Naive thymus-derived CD4-positive, alpha-beta T cell (primary cell): ENCODE measurements at regions of chr19 and their contacts with region 1.

Region 1: GRCh38 chr19:33373701-33374421 is at the start of gene CEBPG:
- DNase-seq: peak in 2 of 9 donors; percentile 57 to 68
- ATAC-seq: peak; percentile 52
- H3K4me3 ChIP-seq: peak within 1 kb of the TSS; percentile 93
- H3K4me3 Mint-ChIP-seq: peak within 1 kb of the TSS; percentile 87 to 95 (median 92)
- H3K27ac ChIP-seq: peak within 1 kb of the TSS; percentile 98
- H3K27ac Mint-ChIP-seq: peak within 1 kb of the TSS; percentile 73 to 97 (median 85)
- H3K4me1 ChIP-seq: peaks cover 16 to 19% of the 10 kb centered on the region in 2 donors
- H3K4me1 Mint-ChIP-seq: peaks cover 36 to 52% (median 48%) of the 10 kb centered on the region in 7 donors
- H3K27me3 ChIP-seq: no peaks in the 10 kb centered on the region
- H3K27me3 Mint-ChIP-seq: peaks cover 0 to 3% (median 0%) of the 10 kb centered on the region in 5 donors
- total RNA-seq, gene CEBPG: 17.1 to 22.4 (median 21.1) TPM

Region 2: GRCh38 chr19:32345261-32346207 is 1028.3 kb before region 1 on chr19 and contains the start of gene ZNF507:
- CTCF ChIA-PET with region 1: no interaction called
- POLR2A ChIA-PET with region 1: no interaction called
- intact Hi-C with region 1: loop called in 1 of 2 experiments (anchors 10 kb)
- DNase-seq: peak; percentile 69 to 90 (median 77)
- ATAC-seq: peak; percentile 93
- H3K4me3 ChIP-seq: peak within 1 kb of the TSS; percentile 71
- H3K4me3 Mint-ChIP-seq: peak within 1 kb of the TSS; percentile 95 to 99 (median 97)
- H3K27ac ChIP-seq: peak within 1 kb of the TSS; percentile 89
- H3K27ac Mint-ChIP-seq: peak within 1 kb of the TSS; percentile 88 to 99 (median 95)
- H3K4me1 ChIP-seq: peaks cover 27 to 30% of the 10 kb centered on the region in 2 donors
- H3K4me1 Mint-ChIP-seq: peaks cover 30 to 47% (median 43%) of the 10 kb centered on the region in 7 donors
- H3K27me3 ChIP-seq: no peaks in the 10 kb centered on the region
- H3K27me3 Mint-ChIP-seq: peaks cover 0 to 18% (median 5%) of the 10 kb centered on the region in 5 donors
- total RNA-seq, gene ZNF507: 21.6 to 46.3 (median 36.4) TPM

Region 3: GRCh38 chr19:32971715-32972540 is 401.9 kb before region 1 on chr19 and contains the starts of genes CEP89 and FAAP24:
- CTCF ChIA-PET with region 1: no interaction called
- POLR2A ChIA-PET with region 1: no interaction called
- intact Hi-C with region 1: loop called (anchors 2 kb)
- DNase-seq: peak; percentile 89 to 99 (median 98)
- ATAC-seq: peak; percentile 98
- H3K4me3 ChIP-seq: peak within 1 kb of the TSS; percentile 78
- H3K4me3 Mint-ChIP-seq: peak within 1 kb of the TSS; percentile 96 to 100 (median 99)
- H3K27ac ChIP-seq: peak within 1 kb of the TSS; percentile 75
- H3K27ac Mint-ChIP-seq: peak within 1 kb of the TSS; percentile 92 to 97 (median 97)
- H3K4me1 ChIP-seq: peaks cover 0 to 5% of the 10 kb centered on the region in 2 donors
- H3K4me1 Mint-ChIP-seq: peaks cover 14 to 27% (median 20%) of the 10 kb centered on the region in 7 donors
- H3K27me3 ChIP-seq: no peaks in the 10 kb centered on the region
- H3K27me3 Mint-ChIP-seq: no peaks in the 10 kb centered on the region
- total RNA-seq, gene CEP89: 7.4 to 22.4 (median 20.1) TPM
- total RNA-seq, gene FAAP24: 0.71 to 7.2 (median 2.5) TPM

Region 4: DNA sequence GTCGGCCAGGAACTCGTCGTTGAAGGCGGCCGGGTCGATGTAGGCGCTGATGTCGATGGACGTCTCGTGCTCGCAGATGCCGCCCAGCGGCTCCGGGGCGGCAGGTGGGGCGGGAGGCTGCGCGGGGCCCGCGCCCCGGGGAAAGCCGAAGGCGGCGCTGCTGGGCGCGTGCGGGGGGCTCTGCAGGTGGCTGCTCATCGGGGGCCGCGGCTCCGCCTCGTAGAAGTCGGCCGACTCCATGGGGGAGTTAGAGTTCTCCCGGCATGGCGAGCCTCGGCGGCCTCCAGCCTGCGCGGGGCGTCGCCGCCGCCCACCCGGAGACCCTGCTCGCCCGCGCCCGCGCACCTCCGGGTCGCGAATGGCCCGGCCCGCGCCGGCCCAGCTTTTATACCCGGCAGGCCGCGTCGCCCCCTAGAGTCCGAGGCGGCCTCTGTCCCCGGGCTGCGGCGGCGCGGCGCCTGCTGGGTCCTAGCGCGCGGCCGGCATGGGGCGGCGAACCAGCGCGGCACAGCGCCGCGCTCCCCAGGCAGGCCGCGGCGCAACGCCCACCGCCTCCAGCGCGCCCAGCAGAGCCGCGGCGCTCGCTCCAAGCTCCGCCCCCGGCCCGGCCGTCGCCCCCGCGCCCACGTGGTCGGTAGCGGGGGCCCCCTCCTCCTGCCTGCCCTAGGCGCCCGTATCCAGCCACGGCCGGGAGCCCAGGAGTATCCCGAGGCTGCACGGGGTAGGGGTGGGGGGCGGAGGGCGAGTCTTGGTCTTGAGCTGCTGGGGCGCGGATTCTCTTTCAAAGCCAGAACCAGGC is 71.5 kb before region 1 on chr19 and contains the start of gene CEBPA:
- CTCF ChIA-PET with region 1: no interaction called
- POLR2A ChIA-PET with region 1: no interaction called
- intact Hi-C with region 1: loop called (anchors 1 to 2 kb)
- DNase-seq: peak in 3 of 9 donors; percentile 9 to 76 (median 67)
- ATAC-seq: peak; percentile 91
- H3K4me3 ChIP-seq: peak within 1 kb of the TSS; percentile 43
- H3K4me3 Mint-ChIP-seq: peak within 1 kb of the TSS in 7 of 10 donors; percentile 29 to 78 (median 68)
- H3K27ac ChIP-seq: no peak within 1 kb of the TSS
- H3K27ac Mint-ChIP-seq: no peak within 1 kb of the TSS
- H3K4me1 ChIP-seq: no peaks in the 10 kb centered on the region
- H3K4me1 Mint-ChIP-seq: peaks cover 0 to 6% (median 4%) of the 10 kb centered on the region in 7 donors
- H3K27me3 ChIP-seq: no peaks in the 10 kb centered on the region
- H3K27me3 Mint-ChIP-seq: peaks cover 14 to 52% (median 35%) of the 10 kb centered on the region in 5 donors
- total RNA-seq, gene CEBPA: 0.22 to 26.2 (median 1.9) TPM

Region 5: DNA sequence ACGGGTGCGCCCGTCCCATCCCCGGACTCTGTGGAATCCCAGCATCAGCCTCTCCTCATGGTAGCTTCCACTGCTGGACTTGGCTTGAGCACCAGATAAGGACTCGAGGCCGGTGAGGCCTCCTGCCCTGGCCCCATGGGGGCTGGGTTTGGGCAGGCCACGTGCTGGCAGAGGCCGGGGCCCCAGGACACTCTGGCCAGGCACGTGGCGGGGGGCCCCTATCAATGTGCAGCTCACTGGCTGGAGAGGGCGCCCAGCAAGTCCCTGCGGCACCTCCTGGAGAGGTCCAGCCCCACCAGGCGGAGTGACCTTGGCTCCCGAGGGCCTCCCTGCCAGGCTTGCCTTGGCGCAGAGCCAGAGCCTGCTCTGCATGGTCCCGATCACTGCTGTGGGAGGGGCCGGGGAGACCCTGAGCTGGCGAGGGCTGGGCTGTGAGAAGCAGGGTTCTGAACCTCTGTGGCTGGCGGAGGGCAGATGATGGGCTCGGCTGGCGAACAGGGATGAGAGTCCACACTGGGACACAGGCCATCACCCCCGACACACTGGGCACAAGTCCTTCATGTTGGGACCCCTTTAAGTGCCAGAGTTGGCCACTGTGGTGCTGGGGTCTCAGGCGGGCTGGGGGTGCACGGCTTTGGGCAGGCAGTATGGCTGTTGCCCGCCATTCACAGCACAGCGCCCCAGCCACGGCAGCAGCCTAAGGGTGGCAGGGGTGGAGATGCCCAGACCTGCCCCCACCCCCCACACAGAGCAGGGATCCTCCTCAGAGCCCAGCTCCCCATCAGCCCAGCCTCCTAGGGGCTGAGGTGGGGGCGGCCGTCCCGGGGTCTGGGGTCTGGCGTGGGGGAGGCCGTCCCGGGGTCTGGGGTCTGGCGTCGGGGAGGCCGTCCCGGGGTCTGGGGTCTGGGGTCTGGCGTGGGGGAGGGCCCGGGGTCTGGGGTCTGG is 18.8 kb after region 1 on chr19:
- CTCF ChIA-PET with region 1: no interaction called
- POLR2A ChIA-PET with region 1: no interaction called
- intact Hi-C with region 1: no loop called
- DNase-seq: peak in 1 of 9 donors; percentile 4
- ATAC-seq: no peak
- H3K4me3 ChIP-seq: no peak overlapping the region
- H3K4me3 Mint-ChIP-seq: no peak overlapping the region
- H3K27ac ChIP-seq: no peak overlapping the region
- H3K27ac Mint-ChIP-seq: no peak overlapping the region
- H3K4me1 ChIP-seq: no peaks in the 10 kb centered on the region
- H3K4me1 Mint-ChIP-seq: peaks cover 0 to 6% (median 0%) of the 10 kb centered on the region in 7 donors
- H3K27me3 ChIP-seq: no peaks in the 10 kb centered on the region
- H3K27me3 Mint-ChIP-seq: no peaks in the 10 kb centered on the region

Region 6: GRCh38 chr19:34253699-34254551 is 880.1 kb after region 1 on chr19:
- CTCF ChIA-PET with region 1: no interaction called
- POLR2A ChIA-PET with region 1: no interaction called
- intact Hi-C with region 1: loop called in 1 of 2 experiments (anchors 5 kb)
- DNase-seq: peak in 7 of 9 donors; percentile 75 to 88 (median 86)
- ATAC-seq: peak; percentile 51
- H3K4me3 ChIP-seq: peak overlapping the region; percentile 72
- H3K4me3 Mint-ChIP-seq: peak overlapping the region; percentile 86 to 100 (median 96)
- H3K27ac ChIP-seq: peak overlapping the region; percentile 97
- H3K27ac Mint-ChIP-seq: peak overlapping the region; percentile 94 to 100 (median 97)
- H3K4me1 ChIP-seq: peaks cover 6 to 27% of the 10 kb centered on the region in 2 donors
- H3K4me1 Mint-ChIP-seq: peaks cover 12 to 48% (median 36%) of the 10 kb centered on the region in 7 donors
- H3K27me3 ChIP-seq: no peaks in the 10 kb centered on the region
- H3K27me3 Mint-ChIP-seq: no peaks in the 10 kb centered on the region